Left ventricle myocardium inferior (tissue), 1 donor: ENCODE measurements at regions of chr13 and their contacts with region 1.

Region 1: DNA sequence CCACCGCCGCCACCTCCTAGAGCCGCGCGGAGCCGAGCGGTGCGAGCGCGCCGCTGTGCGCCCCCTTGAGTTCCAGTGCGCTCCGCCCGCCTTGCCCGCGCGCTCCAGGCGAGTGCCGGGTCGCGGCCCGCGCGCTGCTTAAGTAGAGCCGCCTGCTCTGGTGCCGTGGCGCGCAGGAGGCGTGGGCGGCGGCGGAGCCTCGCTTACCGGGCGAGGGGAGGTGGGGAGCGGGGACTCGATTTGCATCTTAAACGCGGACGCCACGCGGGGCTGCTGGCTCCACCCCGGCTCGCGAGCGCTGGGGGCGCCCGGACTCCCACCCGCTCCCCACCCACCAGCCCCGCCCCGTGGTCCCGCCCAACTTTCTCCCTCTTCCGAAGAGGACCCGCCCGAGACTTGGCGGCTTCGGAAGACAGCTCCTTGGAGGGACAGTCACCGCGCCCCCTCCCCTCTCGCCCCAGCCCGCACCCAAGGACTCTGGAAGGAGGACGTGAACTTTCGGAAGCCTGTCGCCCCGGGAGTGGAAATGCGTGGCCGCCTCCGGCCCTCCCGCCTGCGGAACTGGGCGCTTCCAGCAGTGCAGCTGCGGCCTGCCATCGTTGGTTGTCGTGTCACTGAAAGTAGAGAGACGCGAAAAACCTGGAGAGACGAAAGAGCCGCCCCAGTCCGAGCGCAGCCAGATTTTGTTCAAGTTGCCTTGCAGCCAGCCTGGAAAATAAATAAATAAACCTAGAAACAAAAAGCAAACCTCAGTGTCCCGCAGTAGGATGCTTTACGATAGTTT is at the start of gene KCTD12:
- DNase-seq: peak; percentile 93
- H3K4me3 ChIP-seq: peak within 1 kb of the TSS; percentile 94
- H3K27ac ChIP-seq: peak within 1 kb of the TSS; percentile 89
- H3K4me1 ChIP-seq: peaks cover 53% of the 10 kb centered on the region
- H3K27me3 ChIP-seq: no peaks in the 10 kb centered on the region
- CTCF ChIP-seq: peak; percentile 56
- total RNA-seq, gene KCTD12: 37.2 TPM

Region 2: GRCh38 chr13:76822698-76823267 is 63.7 kb before region 1 on chr13:
- intact Hi-C with region 1: loop called (anchors 10 kb)
- DNase-seq: no peak
- H3K4me3 ChIP-seq: no peak overlapping the region
- H3K27ac ChIP-seq: peak overlapping the region; percentile 64
- H3K4me1 ChIP-seq: peaks cover 16% of the 10 kb centered on the region
- H3K27me3 ChIP-seq: no peaks in the 10 kb centered on the region
- CTCF ChIP-seq: peak; percentile 46